ENCODE measurements at regions of chr14 and their contacts with region 1.

Region 1: DNA sequence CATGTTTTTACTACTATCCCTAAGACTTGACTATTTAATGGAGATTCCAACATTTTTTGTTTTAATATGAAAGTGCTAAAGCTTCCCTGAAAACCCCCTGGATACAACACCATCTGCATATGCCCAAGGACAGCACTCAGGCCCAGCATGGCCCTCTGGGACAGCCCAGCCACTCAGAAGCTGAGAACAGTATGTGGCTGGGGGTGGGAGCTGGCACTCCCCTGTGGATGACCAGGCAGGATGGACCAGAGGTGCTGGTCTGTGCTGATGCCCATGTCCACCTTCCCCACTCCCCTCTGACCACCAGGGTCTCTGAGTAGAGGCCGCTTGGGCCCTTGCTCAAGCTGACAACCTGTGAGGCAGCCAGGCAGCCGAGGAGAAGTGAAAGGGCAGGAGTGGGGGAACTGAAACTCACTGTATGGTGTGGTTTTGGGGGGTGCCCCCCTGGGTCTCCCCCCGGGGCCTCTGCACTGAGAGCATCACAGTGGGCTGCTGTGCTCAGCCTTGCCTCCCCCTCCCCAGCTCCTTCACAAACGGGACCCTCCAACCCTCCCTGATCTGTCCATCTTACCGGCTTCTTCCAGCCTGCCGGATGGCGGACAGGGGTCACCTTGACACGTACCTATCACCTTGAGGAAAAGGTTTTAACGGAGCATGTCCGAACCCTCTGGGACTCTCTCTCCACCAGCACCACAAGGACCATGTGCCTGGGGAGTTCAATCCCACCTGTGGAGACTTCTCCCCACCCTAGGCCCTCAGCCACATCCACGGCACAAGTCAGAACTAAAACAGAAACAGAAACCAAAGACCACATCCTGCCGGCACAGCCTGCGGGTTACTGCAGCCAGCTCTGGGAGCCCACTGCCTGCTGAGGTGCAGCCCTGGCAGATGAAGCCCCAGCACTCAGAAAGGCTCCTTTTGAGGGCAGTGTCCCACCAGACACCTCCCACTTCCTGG is at the start of gene TMEM229B:
- DNase-seq: peak; percentile 95
- H3K4me3 Mint-ChIP-seq: peak within 1 kb of the TSS; percentile 90
- H3K27ac Mint-ChIP-seq: peak within 1 kb of the TSS; percentile 95
- H3K4me1 Mint-ChIP-seq: peaks cover 44% of the 10 kb centered on the region
- H3K27me3 Mint-ChIP-seq: peaks cover 15% of the 10 kb centered on the region
- total RNA-seq, gene TMEM229B: 2.4 and 2.7 TPM in 2 replicates

Region 2: DNA sequence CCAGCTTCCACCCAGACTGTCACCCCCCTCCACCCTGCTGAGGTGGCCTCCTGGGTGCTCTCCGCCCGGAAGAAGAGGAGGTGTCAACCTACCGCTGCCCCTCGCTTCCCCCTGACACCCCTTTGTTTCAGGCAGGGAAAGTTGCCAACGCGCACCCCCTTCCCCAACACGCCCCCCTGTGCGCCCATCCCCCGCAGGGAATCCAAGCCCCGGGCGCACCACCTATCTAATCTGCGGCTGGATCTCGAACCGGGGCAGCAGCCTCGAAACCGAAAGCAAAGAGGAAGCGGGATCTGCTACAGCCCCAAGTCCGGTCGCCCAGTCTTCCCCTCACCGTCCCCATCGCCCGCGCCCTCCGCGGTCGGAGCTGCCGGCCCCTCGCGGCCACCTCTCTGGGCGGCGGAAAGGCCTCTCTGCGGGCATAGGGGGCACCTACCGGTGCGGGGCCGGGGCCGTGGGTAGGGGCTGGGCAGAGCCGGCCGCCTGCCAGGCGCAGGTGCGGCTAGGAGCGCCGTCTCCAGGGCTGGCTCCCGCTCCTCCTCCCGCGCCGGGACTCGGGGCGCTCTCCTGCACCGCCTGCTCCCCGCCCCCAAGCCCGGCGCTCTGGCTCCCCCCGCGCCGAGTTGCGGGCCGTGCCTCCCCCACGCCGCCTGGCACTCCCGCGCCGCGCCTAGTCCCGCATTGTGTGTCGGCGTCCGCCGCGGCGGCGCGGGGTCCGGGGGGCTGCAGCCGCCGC is 26.6 kb after region 1 on chr14:
- intact Hi-C with region 1: loop called (anchors 2 kb)
- DNase-seq: peak; percentile 87
- H3K4me3 Mint-ChIP-seq: peak overlapping the region; percentile 87
- H3K27ac Mint-ChIP-seq: peak overlapping the region; percentile 25
- H3K4me1 Mint-ChIP-seq: peaks cover 8% of the 10 kb centered on the region
- H3K27me3 Mint-ChIP-seq: peaks cover 65% of the 10 kb centered on the region

Region 3: GRCh38 chr14:67532998-67533753 is 45.0 kb after region 1 on chr14 and contains the start of gene PLEKHH1:
- intact Hi-C with region 1: loop called (anchors 5 kb)
- DNase-seq: peak; percentile 89
- H3K4me3 Mint-ChIP-seq: peak within 1 kb of the TSS; percentile 77
- H3K27ac Mint-ChIP-seq: no peak within 1 kb of the TSS
- H3K4me1 Mint-ChIP-seq: peaks cover 5% of the 10 kb centered on the region
- H3K27me3 Mint-ChIP-seq: peaks cover 54% of the 10 kb centered on the region
- total RNA-seq, gene PLEKHH1: 1.5 and 1.7 TPM in 2 replicates

Region 4: DNA sequence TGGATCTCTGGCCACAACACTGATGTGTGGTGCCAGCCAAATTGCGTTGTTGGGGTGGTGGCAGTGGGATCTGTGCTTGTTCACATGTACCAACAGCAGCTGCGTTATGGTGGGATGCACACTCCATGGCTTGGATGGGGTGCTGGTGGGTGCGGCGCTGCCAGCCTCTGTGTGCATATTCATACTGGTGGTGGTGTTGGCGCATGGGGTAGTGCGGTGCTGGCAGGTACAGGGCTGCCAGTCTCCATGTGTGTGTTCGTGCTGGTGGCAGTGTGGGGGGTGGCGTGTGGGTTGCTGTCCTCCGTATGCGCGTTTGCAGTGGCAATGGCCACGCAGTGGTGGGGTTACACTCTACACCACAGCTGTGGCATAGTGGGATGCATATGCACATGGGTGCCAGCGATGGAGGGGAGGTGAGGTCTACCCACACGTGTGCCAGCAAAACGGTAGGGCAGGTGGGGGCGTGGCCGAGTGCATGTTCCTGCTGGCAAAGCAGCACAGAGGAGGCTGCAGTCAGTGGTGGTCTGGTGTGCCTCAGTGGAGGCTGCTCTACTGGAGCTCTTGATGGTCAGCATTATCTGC is 357.9 kb after region 1 on chr14:
- intact Hi-C with region 1: no loop called
- DNase-seq: no peak
- H3K4me3 Mint-ChIP-seq: no peak overlapping the region
- H3K27ac Mint-ChIP-seq: no peak overlapping the region
- H3K4me1 Mint-ChIP-seq: peaks cover under 1% of the 10 kb centered on the region
- H3K27me3 Mint-ChIP-seq: no peaks in the 10 kb centered on the region

Measured in activated CD4-positive, alpha-beta T cell treated with anti-CD3 and anti-CD28 coated beads, Interleukin-2, amount 10 ng/mL, durations not matched to agents 24 days and 14 days (primary cell).